Heart right ventricle (tissue), 16 donors: ENCODE measurements at regions of chr3 and their contacts with region 1.

Region 1: DNA sequence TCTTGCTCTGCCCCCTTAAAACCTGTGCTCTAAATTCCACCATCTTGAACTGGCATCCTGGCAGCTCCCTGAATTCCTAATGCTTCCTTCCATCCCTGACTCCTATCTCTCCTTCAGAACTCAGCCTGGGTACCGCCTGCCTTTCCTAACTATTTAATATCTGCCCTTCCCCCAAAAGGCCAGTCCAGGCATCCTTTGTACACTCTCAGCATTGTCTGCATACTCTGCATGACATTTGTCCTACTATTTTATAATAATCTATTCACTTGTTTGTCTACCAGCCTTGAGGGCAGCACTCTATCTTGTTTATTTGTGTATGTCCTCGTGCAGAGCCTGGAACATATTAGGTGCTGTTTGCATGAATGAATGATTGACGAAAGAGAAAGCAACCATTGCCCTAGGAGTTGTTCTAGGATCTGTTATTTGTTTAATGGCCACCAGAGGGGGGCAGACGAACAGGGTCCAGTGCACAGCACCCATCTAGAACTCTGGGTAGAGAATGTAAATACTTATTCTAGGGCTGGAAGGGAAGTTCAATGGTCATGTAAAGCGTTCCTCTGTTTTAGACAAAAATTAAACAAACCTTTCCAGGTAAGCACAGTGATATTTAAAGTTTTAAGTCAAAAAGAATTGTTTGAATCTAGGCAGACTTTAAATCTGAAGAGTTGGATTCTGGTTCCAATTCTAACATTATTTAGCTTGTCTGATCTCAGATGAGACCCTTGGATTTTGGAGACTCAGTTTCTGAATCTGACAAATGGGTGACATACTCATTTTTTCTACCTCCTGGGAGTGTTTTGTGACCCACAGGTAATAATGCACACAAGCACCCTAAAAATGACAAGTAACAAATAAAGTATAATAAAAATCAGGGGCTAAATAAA is 125.8 kb upstream of the GALNT15 start:
- DNase-seq: peak in 1 of 2 donors; percentile 68
- ATAC-seq: peak; percentile 75 to 89 (median 85)
- H3K4me3 ChIP-seq: peak overlapping the region in 2 of 10 donors; percentile 9 to 33
- H3K27ac ChIP-seq: peak overlapping the region in 1 of 10 donors; percentile 15
- H3K4me1 ChIP-seq: peaks cover 0 to 39% (median 15%) of the 10 kb centered on the region in 9 donors
- H3K27me3 ChIP-seq: no peaks in the 10 kb centered on the region
- CTCF ChIP-seq: peak; percentile 78 to 92 (median 83)

Region 2: GRCh38 chr3:15859507-15860013 is 189.1 kb before region 1 on chr3:
- intact Hi-C with region 1: loop called in 1 of 10 experiments (anchors 10 kb)
- DNase-seq: peak; percentile 81 to 83
- ATAC-seq: peak; percentile 94 to 97 (median 96)
- H3K4me3 ChIP-seq: peak overlapping the region; percentile 73 to 99 (median 90)
- H3K27ac ChIP-seq: peak overlapping the region in 9 of 10 donors; percentile 64 to 84 (median 77)
- H3K4me1 ChIP-seq: peaks cover 0 to 24% (median 15%) of the 10 kb centered on the region in 9 donors
- H3K27me3 ChIP-seq: no peaks in the 10 kb centered on the region
- CTCF ChIP-seq: no peak

Region 3: DNA sequence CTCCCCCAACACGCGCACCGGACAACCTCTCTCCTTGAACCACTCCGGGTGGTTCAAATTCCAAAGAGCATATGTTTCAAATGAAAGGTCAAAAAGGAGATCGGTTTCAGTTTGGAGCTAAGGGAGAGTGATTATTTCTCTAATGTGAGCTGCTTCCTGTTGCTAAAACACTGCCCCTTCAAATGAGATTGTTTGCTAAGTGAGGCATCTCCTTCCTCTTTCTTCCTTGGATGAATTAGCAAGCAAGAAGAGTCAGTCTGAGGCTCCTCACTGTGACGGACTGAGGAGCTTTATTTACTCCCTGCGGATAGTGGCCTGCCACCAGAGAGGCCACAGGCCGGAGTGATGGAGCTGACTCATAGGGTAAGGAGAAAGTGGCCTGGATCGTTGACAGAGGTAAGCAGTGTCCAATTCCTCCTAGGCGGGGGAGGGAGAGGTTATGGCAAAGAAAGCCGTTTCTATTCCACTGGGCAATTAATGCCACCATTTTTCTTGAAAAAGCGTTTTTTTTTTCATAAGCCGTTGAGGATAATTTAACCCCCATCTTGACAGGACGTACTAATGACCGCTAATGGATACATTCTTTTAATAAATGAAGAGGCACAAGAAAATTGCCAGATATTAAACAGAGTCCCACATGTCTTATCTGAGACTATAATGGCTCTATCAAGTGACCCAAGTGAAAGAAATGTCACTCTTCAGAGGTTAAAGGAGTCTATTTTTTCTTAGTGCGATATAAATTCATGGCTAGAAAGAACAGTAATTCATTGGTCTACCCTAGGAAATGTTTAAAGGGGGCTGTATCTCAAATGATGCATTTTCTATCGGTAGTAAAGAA is 83.9 kb before region 1 on chr3:
- intact Hi-C with region 1: no loop called
- DNase-seq: no peak
- ATAC-seq: peak in 5 of 8 donors; percentile 35 to 63 (median 37)
- H3K4me3 ChIP-seq: peak overlapping the region in 2 of 10 donors; percentile 0 to 23
- H3K27ac ChIP-seq: peak overlapping the region in 7 of 10 donors; percentile 10 to 76 (median 27)
- H3K4me1 ChIP-seq: peaks cover 0 to 12% (median 10%) of the 10 kb centered on the region in 9 donors
- H3K27me3 ChIP-seq: no peaks in the 10 kb centered on the region
- CTCF ChIP-seq: no peak

Region 4: DNA sequence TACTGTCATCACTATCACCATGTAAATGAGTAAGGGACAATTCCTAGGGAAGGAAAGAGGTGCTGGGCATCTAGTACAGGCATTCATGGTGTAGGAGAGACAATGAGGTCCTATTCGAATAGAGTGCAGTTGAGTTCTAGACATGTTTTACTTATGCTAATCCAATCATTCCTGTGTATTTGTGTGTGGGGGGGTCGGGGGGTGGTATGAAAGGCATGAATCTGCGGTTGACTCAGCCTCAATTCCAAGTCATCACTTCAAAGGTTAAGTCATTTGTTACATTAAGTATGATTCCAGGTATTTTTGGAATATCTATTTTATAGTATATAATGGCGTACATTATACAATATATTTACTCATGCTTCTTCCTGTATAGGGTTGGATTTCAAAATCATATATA is 37.3 kb before region 1 on chr3:
- intact Hi-C with region 1: no loop called
- DNase-seq: no peak
- ATAC-seq: no peak
- H3K4me3 ChIP-seq: no peak overlapping the region
- H3K27ac ChIP-seq: no peak overlapping the region
- H3K4me1 ChIP-seq: no peaks in the 10 kb centered on the region
- H3K27me3 ChIP-seq: no peaks in the 10 kb centered on the region
- CTCF ChIP-seq: no peak

Region 5: GRCh38 chr3:16177962-16178627 is 129.4 kb after region 1 on chr3:
- intact Hi-C with region 1: loop called (anchors 1 to 2 kb)
- DNase-seq: peak; percentile 72 to 86
- ATAC-seq: peak; percentile 73 to 83 (median 78)
- H3K4me3 ChIP-seq: peak overlapping the region in 6 of 10 donors; percentile 23 to 42 (median 36)
- H3K27ac ChIP-seq: no peak overlapping the region
- H3K4me1 ChIP-seq: peaks cover 0 to 58% (median 35%) of the 10 kb centered on the region in 9 donors
- H3K27me3 ChIP-seq: peaks cover 0 to 7% (median 0%) of the 10 kb centered on the region in 7 donors
- CTCF ChIP-seq: peak; percentile 94 to 99 (median 98)

Region 6: GRCh38 chr3:16240283-16241023 is 191.8 kb after region 1 on chr3:
- intact Hi-C with region 1: loop called in 2 of 10 experiments (anchors 2 to 5 kb)
- DNase-seq: no peak
- ATAC-seq: no peak
- H3K4me3 ChIP-seq: no peak overlapping the region
- H3K27ac ChIP-seq: peak overlapping the region in 1 of 10 donors; percentile 49
- H3K4me1 ChIP-seq: peaks cover 0 to 53% (median 35%) of the 10 kb centered on the region in 9 donors
- H3K27me3 ChIP-seq: no peaks in the 10 kb centered on the region
- CTCF ChIP-seq: no peak

Region 7: DNA sequence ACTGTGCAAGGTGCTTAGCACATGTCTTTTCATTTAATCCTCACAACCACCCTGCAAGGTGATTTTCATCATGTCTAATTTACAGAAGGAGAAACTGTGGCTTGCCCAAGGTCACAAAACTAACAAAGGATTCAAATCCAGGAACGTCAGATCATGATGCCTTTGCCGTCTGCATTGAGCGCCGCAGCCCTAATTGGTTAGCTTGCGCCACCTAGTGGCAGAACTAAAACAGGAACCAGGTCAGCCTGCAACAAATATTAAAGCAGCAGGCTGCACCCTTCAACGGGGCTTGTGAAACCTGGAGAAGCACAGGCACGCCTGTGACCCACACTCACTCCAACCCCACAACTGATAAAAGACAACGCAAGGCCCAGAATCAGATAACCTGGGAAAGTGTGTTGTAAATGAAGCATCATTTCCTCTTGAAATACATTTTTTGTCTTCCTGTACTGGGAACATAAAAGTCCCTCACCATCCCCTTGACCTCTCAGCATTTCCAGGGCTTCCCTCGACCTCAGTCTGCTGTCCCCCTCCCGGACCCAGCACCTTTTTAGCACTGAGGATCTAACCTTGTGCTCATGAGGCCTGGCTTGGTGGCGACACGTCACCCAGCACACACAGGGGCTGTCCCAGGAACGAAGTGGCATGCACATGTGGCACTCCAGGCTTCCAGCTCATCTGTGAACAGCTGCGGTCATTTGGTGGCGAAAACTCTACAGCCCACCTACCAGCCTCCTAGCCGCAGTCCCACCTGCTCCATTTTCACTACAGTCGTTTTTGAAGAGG is 198.8 kb after region 1 on chr3:
- intact Hi-C with region 1: loop called (anchors 1 to 5 kb)
- DNase-seq: peak; percentile 63 to 84
- ATAC-seq: peak; percentile 24 to 83 (median 72)
- H3K4me3 ChIP-seq: no peak overlapping the region
- H3K27ac ChIP-seq: no peak overlapping the region
- H3K4me1 ChIP-seq: peaks cover 0 to 27% (median 16%) of the 10 kb centered on the region in 9 donors
- H3K27me3 ChIP-seq: no peaks in the 10 kb centered on the region
- CTCF ChIP-seq: peak; percentile 85 to 98 (median 94)